ENCODE measurements at regions of chr1 and their contacts with region 1.

Region 1: DNA sequence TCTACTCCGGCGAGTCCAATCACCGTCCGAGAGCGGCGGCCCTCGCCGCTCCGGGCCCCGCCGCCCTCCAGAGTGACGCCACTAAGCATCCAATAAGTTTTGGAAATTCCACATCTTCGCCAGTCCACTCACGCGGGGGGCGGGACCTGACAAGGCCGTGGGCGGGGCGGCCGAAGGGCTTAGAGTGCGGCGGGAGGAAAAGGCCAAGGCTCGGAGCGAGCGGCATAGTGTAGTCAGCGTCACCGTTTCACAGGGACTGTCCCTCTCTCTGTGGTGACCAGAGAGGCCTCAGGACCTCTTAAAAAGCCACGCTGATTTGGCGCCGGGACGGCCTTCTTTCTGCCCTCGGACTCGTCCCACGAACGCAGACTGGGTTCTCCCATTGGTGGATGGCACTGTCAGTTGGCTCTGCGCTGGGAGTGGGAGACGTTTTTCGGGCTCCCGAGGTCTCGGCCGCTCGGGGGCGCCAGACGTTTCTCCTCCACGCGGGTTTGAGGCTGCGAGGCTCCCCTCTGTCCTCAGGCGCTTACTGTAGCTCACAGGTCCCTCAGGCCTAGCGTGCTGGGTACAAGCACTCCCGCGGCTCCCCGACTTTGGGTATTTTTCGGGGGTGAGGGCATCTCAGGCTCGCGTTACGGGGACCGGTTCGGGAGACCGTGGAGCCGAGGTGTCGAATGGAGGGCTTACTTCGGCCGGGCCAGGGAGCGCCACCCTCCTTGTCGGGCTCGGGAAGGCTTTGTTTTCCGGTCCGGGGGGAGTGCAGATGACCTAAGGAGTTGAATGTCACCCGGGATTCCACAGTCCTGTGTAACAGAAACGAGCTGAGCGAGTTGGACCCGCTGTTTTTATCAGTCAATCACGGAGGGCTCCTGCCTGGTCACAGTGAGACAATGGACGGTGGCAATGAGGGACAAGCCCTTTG is 488 bp upstream of the TRIM45 start:
- H3K4me3 Mint-ChIP-seq: peak overlapping the region; percentile 79
- H3K27ac Mint-ChIP-seq: peak overlapping the region; percentile 85
- H3K4me1 Mint-ChIP-seq: peaks cover 9% of the 10 kb centered on the region
- H3K27me3 Mint-ChIP-seq: peaks cover 13% of the 10 kb centered on the region

Region 2: GRCh38 chr1:116472431-116472961 is 649.5 kb before region 1 on chr1:
- intact Hi-C with region 1: no loop called
- H3K4me3 Mint-ChIP-seq: no peak overlapping the region
- H3K27ac Mint-ChIP-seq: no peak overlapping the region
- H3K4me1 Mint-ChIP-seq: no peaks in the 10 kb centered on the region
- H3K27me3 Mint-ChIP-seq: peaks cover 3% of the 10 kb centered on the region

Region 3: DNA sequence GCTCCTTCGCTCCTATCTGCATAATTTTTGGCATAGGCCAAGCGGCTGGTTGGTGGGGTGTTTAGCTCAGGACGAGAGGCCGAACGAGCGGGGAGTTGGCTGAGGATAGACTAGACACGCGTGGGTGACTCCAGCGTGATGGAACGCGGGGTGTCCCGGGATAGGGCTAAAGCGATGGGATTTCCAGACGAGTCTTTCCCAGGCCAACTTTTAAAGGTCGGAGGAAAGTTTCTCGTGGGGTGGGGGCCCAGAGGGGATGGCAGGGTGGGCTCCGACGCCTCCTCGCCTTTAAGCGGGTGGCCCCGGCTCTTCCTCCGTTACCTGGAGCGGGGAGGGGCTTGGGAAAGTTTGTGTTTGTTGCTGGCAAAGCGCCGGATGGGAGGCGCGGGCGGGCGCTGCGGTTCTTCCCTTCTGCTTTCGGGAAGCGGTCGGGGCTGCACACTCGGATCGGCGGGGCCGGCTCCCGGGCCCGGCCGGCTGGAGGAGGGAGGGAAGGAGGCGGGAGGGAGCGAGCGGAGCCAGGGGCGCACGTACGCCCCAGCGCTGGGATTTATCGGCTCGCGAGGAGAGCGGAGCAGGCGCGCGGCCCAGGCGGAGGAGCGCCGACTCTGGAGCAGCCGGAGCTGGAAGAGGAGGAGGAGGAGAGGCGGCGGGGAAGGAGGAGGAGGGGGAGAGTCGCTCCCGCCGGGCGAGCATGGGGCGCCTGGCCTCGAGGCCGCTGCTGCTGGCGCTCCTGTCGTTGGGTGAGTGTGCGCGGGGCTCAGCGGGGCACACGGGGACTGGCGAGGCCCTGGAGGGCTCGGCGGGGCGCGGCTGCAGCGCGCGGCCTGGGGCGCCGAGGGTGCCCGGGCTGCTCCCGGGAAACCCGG is 212.3 kb before region 1 on chr1 and contains the start of gene PTGFRN:
- intact Hi-C with region 1: no loop called
- H3K4me3 Mint-ChIP-seq: peak within 1 kb of the TSS; percentile 83
- H3K27ac Mint-ChIP-seq: no peak within 1 kb of the TSS
- H3K4me1 Mint-ChIP-seq: peaks cover 9% of the 10 kb centered on the region
- H3K27me3 Mint-ChIP-seq: peaks cover 27% of the 10 kb centered on the region

Region 4: DNA sequence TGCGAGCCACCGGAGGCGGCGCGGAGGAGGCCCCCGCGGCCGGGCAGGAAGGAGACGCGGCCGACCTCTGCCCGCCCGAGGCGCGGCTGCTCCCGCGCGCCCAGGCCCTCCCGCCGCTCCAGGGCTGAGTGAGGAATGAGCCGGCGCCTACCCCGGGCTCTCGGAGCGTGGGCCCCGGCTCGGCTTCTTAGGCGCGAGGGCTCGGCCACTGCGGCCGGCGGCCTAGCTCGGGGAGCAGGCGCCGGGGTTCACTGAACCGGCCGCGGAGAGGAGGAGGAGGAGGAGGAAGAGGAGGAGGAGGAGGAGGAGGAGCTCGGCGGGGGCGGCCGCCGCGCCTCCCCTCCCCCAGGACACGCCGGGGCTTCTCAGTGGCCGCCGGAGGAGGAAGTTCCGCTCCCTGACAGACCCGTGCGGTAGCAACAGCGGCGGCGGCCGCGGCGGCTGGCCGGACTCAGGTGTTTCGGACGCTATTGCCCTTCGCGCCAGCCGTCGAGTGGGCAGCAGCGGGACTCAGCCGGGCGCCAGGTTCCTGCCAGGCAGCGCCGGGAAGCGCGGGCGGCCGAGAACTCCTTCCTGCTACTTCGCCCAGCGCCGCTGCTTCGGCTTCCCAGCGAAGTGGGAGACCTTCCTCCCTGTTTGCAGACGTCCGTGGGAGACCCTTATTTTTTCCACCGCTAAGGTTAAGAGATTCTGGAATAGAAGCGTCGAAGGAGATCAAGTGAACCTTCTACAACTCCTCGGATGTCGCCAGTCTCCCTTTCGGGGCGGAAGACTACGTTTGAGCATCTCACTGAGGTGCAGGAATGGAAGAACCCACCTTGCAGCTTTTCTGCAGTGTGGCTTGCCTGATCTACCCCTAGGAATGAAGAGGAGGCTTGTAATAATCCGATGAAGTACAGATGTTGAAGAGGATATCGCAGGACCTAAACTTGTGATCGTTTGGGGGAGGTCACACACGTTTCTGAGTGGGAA is 245.3 kb after region 1 on chr1 and contains the start of gene MAN1A2:
- intact Hi-C with region 1: loop called (anchors 5 kb)
- H3K4me3 Mint-ChIP-seq: peak within 1 kb of the TSS; percentile 96
- H3K27ac Mint-ChIP-seq: peak within 1 kb of the TSS; percentile 91
- H3K4me1 Mint-ChIP-seq: peaks cover 48% of the 10 kb centered on the region
- H3K27me3 Mint-ChIP-seq: no peaks in the 10 kb centered on the region

Measured in dendritic cell treated with granulocyte-macrophage colony-stimulating factor and Interleukin-4, amounts not matched to agents 40 ng/mL and 50 ng/mL, for 4 days (primary cell).